ENCODE measurements at regions of chr2 and their contacts with region 1.

Region 1: GRCh38 chr2:213284105-213285090 is at the start of gene SPAG16:
- DNase-seq: peak; percentile 94 to 97 (median 97)
- ATAC-seq: peak; percentile 99 to 100 (median 100)
- H3K4me3 ChIP-seq: peak within 1 kb of the TSS; percentile 59 to 93 (median 71)
- H3K27ac ChIP-seq: peak within 1 kb of the TSS in 10 of 12 donors; percentile 22 to 77 (median 42)
- H3K4me1 ChIP-seq: peaks cover 0 to 18% (median 7%) of the 10 kb centered on the region in 12 donors
- H3K27me3 ChIP-seq: no peaks in the 10 kb centered on the region
- CTCF ChIP-seq: peak in 1 of 12 donors; percentile 7
- POLR2A ChIP-seq: no peak
- total RNA-seq, gene SPAG16: 12.7 to 26.1 (median 18.7) TPM

Region 2: DNA sequence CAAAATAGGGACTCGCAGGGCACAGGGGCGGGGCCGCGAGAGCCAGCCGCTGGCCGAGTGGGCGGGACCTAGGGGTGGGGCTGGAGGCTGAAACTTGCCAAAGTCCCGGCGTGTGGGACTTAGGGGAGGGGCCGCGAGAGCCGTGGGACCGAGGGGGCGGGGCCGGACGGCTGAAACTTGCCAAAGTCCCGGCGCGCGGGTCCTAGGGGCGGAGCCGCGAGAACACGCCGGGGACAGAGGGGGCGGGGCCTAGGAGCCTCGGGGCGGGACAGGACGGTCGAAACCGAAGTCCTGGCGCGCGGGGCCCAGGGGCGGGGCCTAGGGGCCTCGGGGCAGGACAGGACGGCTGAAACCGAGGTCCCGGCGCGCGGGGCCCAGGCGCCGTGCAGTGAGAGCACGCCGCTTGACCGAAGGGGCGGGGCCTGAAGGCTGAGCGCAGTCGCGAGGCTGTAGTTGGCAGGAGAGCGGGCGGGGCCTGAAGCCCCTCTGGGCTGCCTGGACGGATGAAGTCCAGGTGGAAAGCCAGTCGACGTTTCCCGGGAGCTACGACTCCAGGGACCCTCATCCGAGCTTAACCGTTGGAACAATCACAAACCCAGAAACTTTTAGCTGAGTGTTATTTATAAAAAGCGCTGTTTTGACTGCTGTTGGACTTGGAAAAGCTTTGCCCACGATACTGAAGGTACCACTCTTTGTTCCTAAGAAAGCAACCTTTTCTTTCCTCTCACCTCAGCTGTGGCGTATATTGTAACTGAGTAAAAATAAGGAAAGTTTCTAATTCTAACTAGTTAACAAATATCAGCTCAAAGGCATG is 1525.6 kb after region 1 on chr2:
- intact Hi-C with region 1: loop called in 1 of 10 experiments (anchors 5 kb)
- DNase-seq: peak; percentile 99 to 100 (median 100)
- ATAC-seq: peak; percentile 97 to 99 (median 97)
- H3K4me3 ChIP-seq: peak overlapping the region; percentile 21 to 98 (median 82)
- H3K27ac ChIP-seq: peak overlapping the region in 11 of 12 donors; percentile 75 to 97 (median 83)
- H3K4me1 ChIP-seq: peaks cover 0 to 31% (median 13%) of the 10 kb centered on the region in 12 donors
- H3K27me3 ChIP-seq: no peaks in the 10 kb centered on the region
- CTCF ChIP-seq: no peak
- POLR2A ChIP-seq: peak in 1 of 2 donors; percentile 49